PC-9 (cell line): ENCODE measurements at regions of chr4 and their contacts with region 1.

Region 1: DNA sequence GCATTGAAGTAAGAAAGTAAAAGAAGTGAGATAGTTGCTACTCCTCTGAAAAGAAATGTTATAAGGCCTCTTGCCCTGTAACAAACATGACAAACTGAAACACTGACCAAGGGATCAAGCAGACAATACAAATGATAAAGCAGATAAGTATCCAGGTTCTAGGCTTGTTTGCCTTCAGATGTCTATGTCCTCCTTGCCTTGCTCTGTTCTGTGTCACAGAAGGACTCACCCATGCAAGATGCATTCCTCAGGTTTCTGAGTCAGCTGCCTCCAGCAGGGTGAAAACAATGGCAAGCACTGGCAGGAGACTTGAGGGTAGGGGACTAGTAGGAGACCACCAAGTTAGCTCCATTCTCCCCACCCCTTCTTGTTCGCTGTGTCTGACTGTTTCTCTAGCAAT is 76.6 kb upstream of the CXXC4 start:
- DNase-seq: peak; percentile 42 to 43
- H3K4me3 ChIP-seq: no peak overlapping the region
- H3K27ac ChIP-seq: no peak overlapping the region
- H3K4me1 ChIP-seq: 0 out of 2 replicates have a peak, but pooled peaks cover 3% of the 10 kb centered on the region
- H3K27me3 ChIP-seq: no peaks in the 10 kb centered on the region
- CTCF ChIP-seq: no peak

Region 2: DNA sequence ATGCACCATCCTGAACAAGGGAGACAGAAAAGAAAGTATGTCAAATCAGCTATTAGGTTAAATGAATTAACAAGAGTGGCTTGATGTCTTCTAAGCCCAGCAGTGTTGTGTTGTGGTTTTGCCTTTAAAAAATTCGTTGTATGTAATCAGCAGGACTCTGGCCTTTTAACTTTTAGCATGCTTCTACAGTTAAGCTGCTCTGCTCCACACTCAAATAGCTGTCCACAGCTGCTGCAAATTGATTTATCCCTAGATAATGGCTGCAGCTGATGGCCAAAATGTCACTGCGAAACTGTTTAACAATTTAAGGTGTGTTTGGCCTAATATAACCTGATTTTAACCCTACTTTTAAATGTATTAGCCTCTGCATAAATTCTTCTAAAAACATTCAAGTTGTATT is 162.4 kb before region 1 on chr4:
- CTCF ChIA-PET with region 1: no interaction called
- POLR2A ChIA-PET with region 1: no interaction called
- intact Hi-C with region 1: no loop called
- DNase-seq: no peak
- H3K4me3 ChIP-seq: no peak overlapping the region
- H3K27ac ChIP-seq: no peak overlapping the region
- H3K4me1 ChIP-seq: no peaks in the 10 kb centered on the region
- H3K27me3 ChIP-seq: no peaks in the 10 kb centered on the region
- CTCF ChIP-seq: no peak

Region 3: DNA sequence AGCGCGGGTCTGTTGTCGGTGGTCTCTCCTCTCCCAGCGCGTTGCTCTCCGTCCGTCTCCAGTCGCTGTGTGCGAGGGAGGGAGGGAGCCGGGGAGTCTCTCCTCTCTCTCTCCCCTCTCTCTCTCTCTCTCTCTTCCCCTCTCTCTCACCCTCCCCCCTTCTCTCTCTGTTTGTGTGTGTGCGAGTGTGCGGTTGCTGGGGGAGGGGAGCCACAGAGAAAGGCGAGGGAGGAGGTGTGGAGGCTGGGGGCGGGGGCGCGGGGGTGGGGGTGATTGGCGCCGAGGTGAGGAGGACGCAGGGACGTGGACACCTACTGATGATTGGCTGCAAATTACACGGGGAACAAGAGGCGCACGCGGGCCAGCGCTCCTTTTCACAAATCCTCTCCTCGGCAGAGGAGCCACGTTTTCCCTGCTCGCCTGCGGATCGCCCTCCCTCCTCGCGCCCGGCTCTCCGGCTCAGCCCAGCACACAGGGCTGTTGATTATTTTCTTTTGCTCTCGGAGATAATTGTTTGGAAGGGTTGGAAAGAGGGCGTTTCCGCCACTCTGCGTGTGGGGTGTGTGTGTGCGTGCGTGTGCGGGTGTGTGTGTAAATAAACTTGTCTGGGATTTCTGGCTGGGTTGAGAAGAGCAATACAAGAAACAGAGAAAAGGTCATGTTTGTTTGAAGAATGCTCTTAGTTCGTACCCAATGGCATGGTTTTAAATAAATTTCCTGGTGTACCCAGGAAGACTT is 76.3 kb before region 1 on chr4 and contains the start of gene CXXC4:
- CTCF ChIA-PET with region 1: no interaction called
- POLR2A ChIA-PET with region 1: no interaction called
- intact Hi-C with region 1: loop called (anchors 2 kb)
- DNase-seq: peak in 1 of 2 experiments; percentile 47
- H3K4me3 ChIP-seq: peak within 1 kb of the TSS; percentile 61
- H3K27ac ChIP-seq: no peak within 1 kb of the TSS
- H3K4me1 ChIP-seq: 0 out of 2 replicates have a peak, but pooled peaks cover 3% of the 10 kb centered on the region
- H3K27me3 ChIP-seq: no peaks in the 10 kb centered on the region
- CTCF ChIP-seq: no peak
- total RNA-seq, gene CXXC4: 0.76 and 0.80 TPM in 2 replicates

Region 4: GRCh38 chr4:105022811-105023667 is 451.7 kb after region 1 on chr4:
- CTCF ChIA-PET with region 1: no interaction called
- POLR2A ChIA-PET with region 1: no interaction called
- intact Hi-C with region 1: no loop called
- DNase-seq: peak in 1 of 2 experiments; percentile 29
- H3K4me3 ChIP-seq: no peak overlapping the region
- H3K27ac ChIP-seq: no peak overlapping the region
- H3K4me1 ChIP-seq: no peaks in the 10 kb centered on the region
- H3K27me3 ChIP-seq: no peaks in the 10 kb centered on the region
- CTCF ChIP-seq: no peak